ENCODE measurements at regions of chr16 and their contacts with region 1.

Region 1: DNA sequence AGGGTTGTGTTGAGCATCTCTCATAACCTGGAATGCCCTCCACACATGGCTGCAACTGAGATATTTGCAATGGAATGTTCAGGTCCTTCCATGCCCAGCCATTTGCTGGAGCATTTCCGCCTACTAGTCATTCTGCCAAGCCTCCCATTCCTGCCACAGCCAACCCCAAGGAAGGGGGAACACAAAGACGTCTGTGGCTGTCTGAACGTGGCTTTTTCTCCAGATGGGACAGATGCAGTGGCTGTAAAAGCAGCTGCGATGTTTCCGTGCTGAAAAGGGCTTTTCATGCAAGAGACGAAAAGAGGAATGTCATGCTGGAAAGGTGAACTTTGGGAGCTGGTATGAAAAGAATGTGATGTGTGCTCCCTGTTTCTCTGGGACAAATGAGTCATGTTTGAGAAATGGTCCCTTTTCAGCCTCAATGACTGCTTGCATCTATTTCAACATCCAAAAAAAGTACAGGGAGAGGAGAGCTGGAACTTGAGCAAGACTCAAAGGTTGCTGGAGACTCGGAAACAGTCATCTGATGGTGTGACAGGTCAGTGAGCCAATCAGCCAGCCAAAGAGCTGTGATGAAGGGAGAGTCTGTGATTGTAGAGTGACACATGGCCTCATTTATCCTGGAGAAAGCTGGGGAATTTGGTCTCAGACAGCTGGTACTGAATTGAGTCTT is 208.9 kb downstream of the SHISA9 start:
- DNase-seq: peak; percentile 12 to 91
- H3K4me3 ChIP-seq: no peak overlapping the region
- H3K27ac ChIP-seq: peak overlapping the region; percentile 74 to 83
- H3K4me1 ChIP-seq: peaks cover 4 to 18% of the 10 kb centered on the region in 2 donors
- H3K27me3 ChIP-seq: no peaks in the 10 kb centered on the region
- CTCF ChIP-seq: no peak

Region 2: DNA sequence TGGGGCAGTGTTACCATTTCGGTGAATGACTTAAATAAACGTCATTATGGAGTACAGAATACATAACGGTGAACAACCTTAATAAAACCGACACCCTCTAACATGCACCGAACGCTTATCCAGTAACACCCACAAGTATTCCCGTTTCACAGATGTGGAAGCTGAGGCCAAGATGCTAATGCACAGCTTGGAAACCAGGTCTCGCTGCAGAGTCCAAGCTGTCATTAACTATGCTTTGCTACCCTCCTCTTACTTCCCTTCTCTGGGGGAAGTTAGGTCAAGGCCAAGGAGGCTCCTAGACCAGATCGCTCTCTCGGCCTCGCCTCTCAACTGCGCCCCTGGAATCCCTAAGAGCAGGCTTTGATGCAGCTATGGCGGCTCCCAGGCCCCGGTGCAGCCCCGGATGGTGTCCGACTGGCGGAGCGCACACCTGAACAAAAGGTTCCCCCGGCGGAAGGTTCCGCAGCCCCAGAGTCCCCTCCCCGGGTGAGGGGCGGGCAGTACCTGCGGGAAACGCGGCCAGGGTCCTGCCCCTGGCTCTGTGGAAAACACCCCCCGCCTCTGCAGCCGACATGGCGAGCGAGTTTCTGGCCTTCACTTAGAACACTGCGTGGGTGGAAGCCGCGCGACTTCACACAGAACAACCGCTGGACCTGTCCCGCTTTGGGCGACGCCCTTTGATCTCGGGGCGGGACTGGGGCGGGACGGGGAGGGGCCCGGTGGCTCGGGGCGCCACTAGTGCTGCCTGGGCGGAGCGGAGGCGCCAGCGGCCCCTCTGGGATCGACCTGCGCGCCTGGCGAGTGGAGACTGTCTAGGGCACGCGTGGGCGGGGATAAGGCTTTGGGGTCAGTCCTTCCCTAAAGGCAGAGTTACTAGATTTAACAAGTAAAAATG is 306.8 kb before region 1 on chr16 and contains the start of gene CPPED1:
- intact Hi-C with region 1: loop called (anchors 1 kb)
- DNase-seq: peak; percentile 61 to 96
- H3K4me3 ChIP-seq: peak within 1 kb of the TSS; percentile 73 to 79
- H3K27ac ChIP-seq: peak within 1 kb of the TSS; percentile 82
- H3K4me1 ChIP-seq: peaks cover 3 to 19% of the 10 kb centered on the region in 2 donors
- H3K27me3 ChIP-seq: no peaks in the 10 kb centered on the region
- CTCF ChIP-seq: no peak
- total RNA-seq, gene CPPED1: 13.3 TPM

Region 3: DNA sequence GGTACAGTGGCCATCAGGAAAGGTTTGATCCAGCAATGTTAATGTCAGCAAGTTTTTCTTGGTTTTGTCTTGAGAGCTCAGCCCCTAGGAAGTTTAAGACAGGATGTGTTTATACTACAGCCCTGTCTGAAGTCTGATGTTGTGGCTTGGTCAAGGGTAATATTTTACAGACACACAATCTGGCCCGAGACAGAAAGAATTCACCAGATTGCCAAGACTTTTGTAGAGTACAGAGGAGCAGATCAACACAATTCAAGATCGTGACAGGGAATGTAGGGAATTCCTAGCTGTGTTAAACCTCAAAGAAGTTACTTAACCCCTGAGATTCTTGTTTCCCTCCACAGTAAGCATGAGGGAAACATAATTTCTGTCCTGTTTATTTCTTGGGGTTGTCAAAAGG is 145.8 kb before region 1 on chr16:
- intact Hi-C with region 1: loop called (anchors 5 kb)
- DNase-seq: no peak
- H3K4me3 ChIP-seq: no peak overlapping the region
- H3K27ac ChIP-seq: no peak overlapping the region
- H3K4me1 ChIP-seq: peaks cover 0 to 5% of the 10 kb centered on the region in 2 donors
- H3K27me3 ChIP-seq: no peaks in the 10 kb centered on the region
- CTCF ChIP-seq: no peak

Measured in ascending aorta (tissue), 2 donors.